Panc1 (cell line): ENCODE measurements at regions of chr3 and their contacts with region 1.

Region 1: GRCh38 chr3:123344907-123345594 is 103.8 kb downstream of the ADCY5 start:
- DNase-seq: no peak
- ATAC-seq: 0 out of 2 replicates have a peak, but pooled peaks have one; percentile 19
- H3K4me3 ChIP-seq: no peak overlapping the region
- H3K27ac ChIP-seq: no peak overlapping the region
- H3K4me1 ChIP-seq: no peaks in the 10 kb centered on the region
- H3K27me3 ChIP-seq: no peaks in the 10 kb centered on the region
- CTCF ChIP-seq: no peak

Region 2: GRCh38 chr3:123310741-123311140 is 34.3 kb before region 1 on chr3:
- CTCF ChIA-PET with region 1: interaction called, 15 read pairs
- POLR2A ChIA-PET with region 1: no interaction called
- in situ Hi-C with region 1: no loop called
- intact Hi-C with region 1: no loop called
- DNase-seq: no peak
- ATAC-seq: no peak
- H3K4me3 ChIP-seq: no peak overlapping the region
- H3K27ac ChIP-seq: no peak overlapping the region
- H3K4me1 ChIP-seq: no peaks in the 10 kb centered on the region
- H3K27me3 ChIP-seq: peaks cover 13% of the 10 kb centered on the region
- CTCF ChIP-seq: no peak

Region 3: DNA sequence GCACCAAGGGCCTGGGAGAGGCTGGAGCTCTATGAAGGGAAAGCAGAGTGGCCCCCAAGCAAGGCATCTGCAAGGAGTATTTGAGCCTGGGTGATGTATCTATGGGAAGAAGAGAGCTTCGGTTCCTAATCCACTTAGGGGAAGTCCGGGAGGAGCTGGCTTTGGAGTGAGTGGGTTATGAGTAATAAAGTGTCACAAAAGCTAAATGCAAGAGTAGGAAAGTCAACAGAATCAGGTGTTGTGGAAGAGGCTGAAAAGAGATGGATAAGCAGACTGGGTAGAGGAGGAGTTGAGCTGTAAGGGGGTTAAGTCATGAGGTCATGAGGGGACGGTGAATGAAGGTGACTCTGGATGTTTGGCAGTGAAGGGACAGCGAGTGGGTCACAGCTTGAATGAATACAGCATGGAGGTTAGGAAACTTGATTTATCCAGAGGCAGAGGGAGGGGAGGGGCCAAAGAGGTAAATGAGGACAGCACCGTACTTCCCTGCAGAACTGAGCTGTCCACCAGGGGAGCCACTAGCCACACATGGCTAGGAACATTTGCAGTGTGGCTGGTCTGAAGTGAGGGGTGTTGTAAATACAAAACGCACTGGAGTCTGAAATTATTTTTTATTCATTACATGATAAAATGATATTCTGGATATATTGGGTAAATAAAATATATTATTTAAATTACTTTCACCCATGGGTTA is 20.5 kb after region 1 on chr3:
- CTCF ChIA-PET with region 1: no interaction called
- POLR2A ChIA-PET with region 1: no interaction called
- in situ Hi-C with region 1: no loop called
- intact Hi-C with region 1: no loop called
- DNase-seq: no peak
- ATAC-seq: peak; percentile 83
- H3K4me3 ChIP-seq: no peak overlapping the region
- H3K27ac ChIP-seq: no peak overlapping the region
- H3K4me1 ChIP-seq: no peaks in the 10 kb centered on the region
- H3K27me3 ChIP-seq: peaks cover 13% of the 10 kb centered on the region
- CTCF ChIP-seq: peak; percentile 75

Region 4: GRCh38 chr3:124107104-124107890 is 762.2 kb after region 1 on chr3:
- CTCF ChIA-PET with region 1: no interaction called
- POLR2A ChIA-PET with region 1: no interaction called
- in situ Hi-C with region 1: no loop called
- intact Hi-C with region 1: no loop called
- DNase-seq: no peak
- ATAC-seq: no peak
- H3K4me3 ChIP-seq: no peak overlapping the region
- H3K27ac ChIP-seq: no peak overlapping the region
- H3K4me1 ChIP-seq: no peaks in the 10 kb centered on the region
- H3K27me3 ChIP-seq: peaks cover 2% of the 10 kb centered on the region; the same call in 1 of the 2 replicates
- CTCF ChIP-seq: no peak